HepG2 (cell line): ENCODE measurements at regions of chr1 and their contacts with region 1.

Region 1: GRCh38 chr1:220767312-220768125 is 19.2 kb upstream of the MTARC1 start:
- DNase-seq: peak; percentile 78
- ATAC-seq: peak; percentile 93
- H3K4me3 ChIP-seq: peak overlapping the region; percentile 34 to 55 (median 34); a peak in 5 of 6 replicates
- H3K27ac ChIP-seq: peak overlapping the region; percentile 87
- H3K4me1 ChIP-seq: peaks cover 49% of the 10 kb centered on the region
- H3K27me3 ChIP-seq: no peaks in the 10 kb centered on the region
- CTCF ChIP-seq: no peak
- EP300 ChIP-seq: peak in 1 of 2 experiments; percentile 70; a peak in 2 of 4 replicates
- POLR2A ChIP-seq: no peak
- RAD21 ChIP-seq: no peak

Region 2: GRCh38 chr1:220690140-220691025 is 77.1 kb before region 1 on chr1 and contains the start of gene C1orf115:
- CTCF ChIA-PET with region 1: no interaction called
- POLR2A ChIA-PET with region 1: interaction called, 3 read pairs
- in situ Hi-C with region 1: no loop called
- intact Hi-C with region 1: loop called (anchors 2 kb)
- DNase-seq: peak; percentile 68
- ATAC-seq: peak; percentile 85
- H3K4me3 ChIP-seq: peak within 1 kb of the TSS; percentile 81 to 86 (median 82)
- H3K27ac ChIP-seq: peak within 1 kb of the TSS; percentile 61
- H3K4me1 ChIP-seq: peaks cover 45% of the 10 kb centered on the region
- H3K27me3 ChIP-seq: no peaks in the 10 kb centered on the region; a peak in 2 of 5 replicates
- CTCF ChIP-seq: peak; percentile 94
- EP300 ChIP-seq: no peak; a peak in 1 of 4 replicates
- POLR2A ChIP-seq: peak; percentile 63 to 87
- RAD21 ChIP-seq: peak; percentile 96
- total RNA-seq, gene C1orf115: 85.9 and 86.7 TPM in 2 replicates